ENCODE measurements at regions of chr2 and their contacts with region 1.

Region 1: GRCh38 chr2:234951664-234952269 is at the start of gene SH3BP4:
- DNase-seq: peak; percentile 84 to 90 (median 89)
- ATAC-seq: peak; percentile 80 to 93 (median 90)
- H3K4me3 ChIP-seq: peak within 1 kb of the TSS; percentile 73 to 100 (median 85)
- H3K27ac ChIP-seq: peak within 1 kb of the TSS; percentile 70 to 91 (median 80)
- H3K4me1 ChIP-seq: peaks cover 0 to 43% (median 17%) of the 10 kb centered on the region in 12 donors
- H3K27me3 ChIP-seq: peaks cover 0 to 33% (median 0%) of the 10 kb centered on the region in 9 donors
- CTCF ChIP-seq: peak in 1 of 12 donors; percentile 2
- POLR2A ChIP-seq: peak in 1 of 2 donors; percentile 17
- total RNA-seq, gene SH3BP4: 8.5 to 33.5 (median 12.4) TPM

Region 2: DNA sequence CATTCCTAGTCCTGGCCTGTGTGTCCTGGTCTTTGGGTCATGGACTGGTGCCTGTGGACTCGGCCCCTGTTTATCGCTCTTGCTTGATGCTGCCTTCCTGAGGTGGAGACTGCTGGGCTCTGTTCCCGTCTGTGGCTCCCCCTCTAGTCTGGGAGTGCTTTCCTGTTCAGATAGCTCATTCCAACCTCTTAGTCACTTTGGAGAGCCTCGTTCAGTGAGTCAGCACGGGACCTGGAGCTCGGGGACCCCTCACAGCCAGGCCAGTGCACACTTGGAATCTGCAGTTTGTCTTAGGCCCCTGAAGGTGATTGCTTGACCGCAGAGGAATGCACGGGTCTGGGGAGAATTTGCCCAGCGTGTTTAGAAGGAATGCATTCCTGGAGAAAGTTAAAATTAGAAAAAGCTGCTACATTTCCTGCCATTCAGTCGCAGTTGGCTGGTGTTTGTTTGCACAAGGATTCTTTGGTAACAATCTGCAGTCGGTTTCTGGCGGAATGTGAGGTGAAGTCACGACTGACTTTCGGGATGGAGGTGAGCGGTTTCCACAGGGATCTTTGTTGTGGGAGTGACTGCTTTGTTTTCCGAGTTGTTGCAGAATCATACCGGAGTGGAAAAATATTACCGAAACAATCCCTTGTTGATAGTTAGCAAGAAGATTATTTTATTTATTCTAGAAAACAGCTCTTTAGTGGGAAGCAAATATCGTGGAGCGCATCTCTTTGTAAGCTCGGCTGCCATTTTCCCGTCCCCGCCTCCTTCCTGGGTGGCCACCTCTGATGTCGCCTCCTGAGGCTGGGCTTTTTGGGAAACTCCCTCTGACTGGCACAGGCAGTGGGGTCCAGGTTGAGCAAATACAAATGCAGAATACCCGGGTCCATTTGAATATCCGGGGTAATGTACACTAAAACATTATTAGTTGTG is 29.7 kb after region 1 on chr2:
- intact Hi-C with region 1: loop called in 2 of 10 experiments (anchors 2 kb)
- DNase-seq: peak; percentile 68 to 85 (median 79)
- ATAC-seq: peak; percentile 84 to 95 (median 92)
- H3K4me3 ChIP-seq: peak overlapping the region in 10 of 12 donors; percentile 17 to 49 (median 30)
- H3K27ac ChIP-seq: peak overlapping the region; percentile 26 to 86 (median 72)
- H3K4me1 ChIP-seq: peaks cover 0 to 88% (median 61%) of the 10 kb centered on the region in 12 donors
- H3K27me3 ChIP-seq: no peaks in the 10 kb centered on the region
- CTCF ChIP-seq: peak in 2 of 12 donors; percentile 11 to 29
- POLR2A ChIP-seq: no peak

Region 3: DNA sequence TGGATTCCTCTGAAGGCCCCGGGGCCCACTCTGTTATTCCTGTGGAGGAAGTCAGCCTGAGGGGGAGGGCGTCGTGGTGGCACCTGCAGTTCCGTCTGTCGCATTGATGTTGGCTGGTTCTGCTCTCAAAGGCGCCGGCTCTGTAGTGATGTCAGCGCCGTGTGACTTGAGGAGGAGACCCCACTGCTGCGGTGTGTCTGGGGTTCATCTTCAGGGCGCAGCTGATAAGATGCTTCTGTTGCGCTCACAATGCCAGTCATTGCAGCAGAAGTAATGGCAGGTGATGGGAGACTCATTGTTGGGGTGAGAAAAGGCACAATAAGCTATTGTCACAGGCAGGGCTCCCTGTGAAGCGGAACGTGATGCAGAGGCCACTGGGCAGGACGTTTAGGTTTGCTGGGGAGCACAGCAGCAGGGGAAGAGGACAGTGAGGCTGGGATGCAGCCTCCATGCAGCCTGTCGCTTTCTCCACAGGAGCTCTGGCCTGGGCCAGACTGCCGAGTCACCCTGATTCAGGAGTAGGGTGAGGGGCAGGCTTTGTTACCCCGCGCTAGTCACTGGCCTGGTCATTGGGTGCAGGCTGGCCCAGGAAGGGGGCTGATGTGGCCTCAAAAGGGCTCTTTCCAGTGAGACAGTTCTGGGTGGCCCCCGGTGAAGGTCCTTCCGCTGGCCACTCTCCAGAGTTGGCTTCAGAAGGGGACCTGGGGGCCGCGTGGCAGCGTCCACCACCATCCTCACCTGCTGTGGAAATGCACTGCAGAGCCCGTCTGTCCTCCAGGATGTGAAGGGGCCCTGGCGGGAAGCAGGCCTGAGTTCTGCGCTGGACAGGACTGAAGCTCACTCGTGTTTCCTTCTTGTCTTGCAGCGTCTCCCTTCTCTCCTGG is 42.9 kb after region 1 on chr2:
- intact Hi-C with region 1: loop called in 1 of 10 experiments (anchors 5 kb)
- DNase-seq: no peak
- ATAC-seq: no peak
- H3K4me3 ChIP-seq: no peak overlapping the region
- H3K27ac ChIP-seq: no peak overlapping the region
- H3K4me1 ChIP-seq: peaks cover 0 to 54% (median 18%) of the 10 kb centered on the region in 12 donors
- H3K27me3 ChIP-seq: no peaks in the 10 kb centered on the region
- CTCF ChIP-seq: no peak
- POLR2A ChIP-seq: no peak

Region 4: GRCh38 chr2:235026649-235027557 is 75.1 kb after region 1 on chr2:
- intact Hi-C with region 1: loop called in 1 of 10 experiments (anchors 2 kb)
- DNase-seq: peak in 4 of 5 donors; percentile 57 to 80 (median 72)
- ATAC-seq: peak in 3 of 4 donors; percentile 37 to 81 (median 78)
- H3K4me3 ChIP-seq: no peak overlapping the region
- H3K27ac ChIP-seq: peak overlapping the region in 1 of 12 donors; percentile 11
- H3K4me1 ChIP-seq: peaks cover 0 to 42% (median 31%) of the 10 kb centered on the region in 12 donors
- H3K27me3 ChIP-seq: no peaks in the 10 kb centered on the region
- CTCF ChIP-seq: no peak
- POLR2A ChIP-seq: no peak

Region 5: DNA sequence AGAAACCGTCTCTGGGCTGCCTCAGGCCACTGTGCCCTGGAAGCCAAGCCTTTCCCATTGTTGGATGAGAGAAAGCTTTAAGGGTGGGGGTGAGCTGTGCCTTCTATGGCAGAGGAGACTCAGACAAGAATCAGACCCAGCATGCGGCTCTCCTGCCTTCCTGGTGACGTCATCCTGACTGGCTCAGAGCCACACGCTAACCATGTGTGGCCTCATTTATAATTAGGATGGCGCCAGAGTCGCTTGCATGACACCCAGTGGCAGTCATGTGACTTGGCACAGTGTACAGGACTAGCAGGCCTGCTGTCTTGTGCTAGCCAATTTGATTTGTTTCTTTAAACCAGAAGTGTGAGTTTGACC is 99.2 kb after region 1 on chr2:
- intact Hi-C with region 1: loop called in 6 of 10 experiments (anchors 2 to 10 kb)
- DNase-seq: peak; percentile 89 to 97 (median 93)
- ATAC-seq: peak; percentile 90 to 95 (median 90)
- H3K4me3 ChIP-seq: no peak overlapping the region
- H3K27ac ChIP-seq: peak overlapping the region; percentile 51 to 86 (median 78)
- H3K4me1 ChIP-seq: peaks cover 2 to 57% (median 27%) of the 10 kb centered on the region in 12 donors
- H3K27me3 ChIP-seq: no peaks in the 10 kb centered on the region
- CTCF ChIP-seq: peak in 6 of 12 donors; percentile 5 to 37 (median 18)
- POLR2A ChIP-seq: peak in 1 of 2 donors; percentile 30

Region 6: DNA sequence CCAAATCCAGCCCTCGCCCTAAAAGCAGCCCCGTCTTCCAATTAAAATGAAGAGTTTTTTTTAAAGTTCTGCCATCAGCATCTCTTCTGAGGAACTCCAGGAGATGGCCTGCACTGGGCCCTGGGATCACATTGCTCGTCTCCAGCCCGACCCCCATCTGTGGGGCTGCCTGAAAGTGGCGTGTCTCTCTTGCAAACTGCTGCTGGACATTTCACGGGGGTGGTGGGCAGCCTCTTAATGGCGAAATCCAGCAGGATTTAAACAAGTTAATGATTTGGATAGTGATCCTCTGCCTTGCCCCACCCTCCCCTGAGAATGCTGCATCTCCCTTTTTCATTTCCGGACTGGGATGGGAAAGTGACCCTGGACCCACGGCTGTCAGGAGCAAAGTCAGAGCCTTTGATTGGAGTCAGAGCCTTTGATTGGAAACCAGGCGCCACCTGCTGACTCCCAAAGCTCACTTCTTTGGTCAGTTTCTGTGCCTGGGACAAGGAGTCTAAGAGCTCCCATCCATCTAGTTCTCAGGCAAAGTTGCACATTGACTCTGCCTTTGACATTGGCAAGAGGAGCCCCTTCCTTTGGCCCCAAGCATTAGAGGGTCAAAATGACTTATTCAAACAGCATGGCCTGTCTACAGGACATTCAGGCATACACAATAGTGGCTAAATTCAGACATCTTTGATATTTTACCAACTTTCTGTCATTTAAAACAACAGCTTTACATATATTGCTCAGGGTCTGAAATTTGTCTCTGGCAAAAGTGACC is 155.3 kb after region 1 on chr2:
- intact Hi-C with region 1: loop called in 2 of 10 experiments (anchors 5 to 10 kb)
- DNase-seq: peak; percentile 54 to 71 (median 67)
- ATAC-seq: peak; percentile 55 to 87 (median 74)
- H3K4me3 ChIP-seq: no peak overlapping the region
- H3K27ac ChIP-seq: no peak overlapping the region
- H3K4me1 ChIP-seq: peaks cover 0 to 13% (median 2%) of the 10 kb centered on the region in 12 donors
- H3K27me3 ChIP-seq: no peaks in the 10 kb centered on the region
- CTCF ChIP-seq: peak; percentile 41 to 84 (median 74)
- POLR2A ChIP-seq: no peak

Region 7: DNA sequence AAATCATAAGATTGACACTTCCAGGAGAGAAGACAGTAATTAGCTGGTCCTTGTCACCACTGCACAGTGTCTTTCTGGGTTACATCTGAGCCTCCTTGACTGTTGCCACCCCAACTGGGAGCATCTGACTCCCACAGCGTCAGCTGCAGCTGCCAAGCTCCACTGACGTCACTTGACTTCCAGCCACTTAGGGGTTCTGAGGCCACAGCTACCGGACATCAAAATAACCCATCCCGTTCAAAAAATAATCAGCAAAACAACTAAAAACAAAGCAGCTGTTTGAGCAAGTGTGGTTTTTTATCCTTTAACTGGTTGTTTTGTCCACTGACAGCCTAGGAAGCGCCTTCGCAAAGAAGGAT is 335.6 kb after region 1 on chr2:
- intact Hi-C with region 1: no loop called
- DNase-seq: peak in 1 of 5 donors; percentile 56
- ATAC-seq: peak in 2 of 4 donors; percentile 74 to 75
- H3K4me3 ChIP-seq: no peak overlapping the region
- H3K27ac ChIP-seq: peak overlapping the region in 3 of 12 donors; percentile 8 to 57 (median 18)
- H3K4me1 ChIP-seq: peaks cover 0 to 7% (median 0%) of the 10 kb centered on the region in 12 donors
- H3K27me3 ChIP-seq: peaks cover 0 to 19% (median 0%) of the 10 kb centered on the region in 9 donors
- CTCF ChIP-seq: no peak
- POLR2A ChIP-seq: no peak

Region 8: DNA sequence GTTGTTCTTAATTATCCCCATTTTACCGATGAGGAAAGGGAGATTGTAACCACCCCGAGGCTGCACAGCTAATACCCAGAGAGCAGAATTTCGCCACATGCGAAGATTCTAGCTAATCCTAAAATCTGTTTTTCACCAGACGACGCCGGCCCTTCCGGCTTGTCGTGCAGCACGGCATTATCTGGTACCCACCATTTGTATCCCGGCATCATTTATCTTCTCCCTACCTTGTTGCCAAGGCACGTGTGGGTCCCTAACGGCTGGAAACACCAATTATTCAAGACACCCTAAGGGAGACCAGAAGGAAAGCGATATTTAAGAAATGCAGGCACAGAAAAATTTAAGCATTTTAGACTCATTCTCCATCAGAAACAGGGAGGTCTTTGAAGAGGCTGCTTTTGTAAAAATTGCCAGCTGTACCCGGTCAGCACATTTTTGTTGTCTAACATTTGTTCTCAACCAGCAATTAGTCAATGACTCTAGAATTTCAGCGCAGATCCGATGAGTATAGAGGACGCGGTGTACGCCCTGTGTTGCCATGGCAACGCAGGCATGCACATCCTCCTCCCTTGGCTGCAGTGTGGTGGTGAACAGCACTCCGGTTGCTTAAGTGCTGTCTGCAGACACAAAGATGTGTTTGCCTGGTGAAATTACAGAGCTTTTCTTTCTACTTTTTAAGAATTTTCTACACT is 653.7 kb after region 1 on chr2:
- intact Hi-C with region 1: no loop called
- DNase-seq: peak; percentile 67 to 90 (median 82)
- ATAC-seq: peak; percentile 81 to 90 (median 88)
- H3K4me3 ChIP-seq: peak overlapping the region in 1 of 12 donors; percentile 2
- H3K27ac ChIP-seq: peak overlapping the region in 3 of 12 donors; percentile 7 to 43 (median 23)
- H3K4me1 ChIP-seq: peaks cover 0 to 36% (median 13%) of the 10 kb centered on the region in 12 donors
- H3K27me3 ChIP-seq: no peaks in the 10 kb centered on the region
- CTCF ChIP-seq: no peak
- POLR2A ChIP-seq: no peak

Measured in heart left ventricle (tissue), 16 donors.